Activated B cell treated with CpG ODN at 0.5 μM for 24 hours (primary cell): ENCODE measurements at regions of chr5 and their contacts with region 1.

Region 1: GRCh38 chr5:6632917-6633468 is at the starts of genes NSUN2 and SRD5A1:
- DNase-seq: peak; percentile 97
- ATAC-seq: peak; percentile 88
- H3K4me3 Mint-ChIP-seq: peak within 1 kb of the TSS; percentile 92
- H3K27ac Mint-ChIP-seq: peak within 1 kb of the TSS; percentile 99
- H3K4me1 Mint-ChIP-seq: peaks cover 44% of the 10 kb centered on the region
- H3K27me3 Mint-ChIP-seq: no peaks in the 10 kb centered on the region
- CTCF ChIP-seq: no peak
- total RNA-seq, gene NSUN2: 86.4 and 93.3 TPM in 2 replicates
- total RNA-seq, gene SRD5A1: 11.5 and 14.8 TPM in 2 replicates

Region 2: GRCh38 chr5:5421961-5422818 is 1210.8 kb before region 1 on chr5 and contains the start of gene ICE1:
- CTCF ChIA-PET with region 1: no interaction called
- POLR2A ChIA-PET with region 1: interaction called, 19 read pairs
- intact Hi-C with region 1: loop called (anchors 1 kb)
- DNase-seq: peak; percentile 92
- ATAC-seq: peak; percentile 87
- H3K4me3 Mint-ChIP-seq: peak within 1 kb of the TSS; percentile 96
- H3K27ac Mint-ChIP-seq: peak within 1 kb of the TSS; percentile 95
- H3K4me1 Mint-ChIP-seq: peaks cover 15% of the 10 kb centered on the region
- H3K27me3 Mint-ChIP-seq: no peaks in the 10 kb centered on the region
- CTCF ChIP-seq: no peak
- total RNA-seq, gene ICE1: 32.7 and 36.8 TPM in 2 replicates

Region 3: GRCh38 chr5:6377905-6378765 is 254.9 kb before region 1 on chr5 and contains the start of gene MED10:
- CTCF ChIA-PET with region 1: no interaction called
- POLR2A ChIA-PET with region 1: interaction called, 17 read pairs
- intact Hi-C with region 1: loop called (anchors 1 kb)
- DNase-seq: peak; percentile 91
- ATAC-seq: peak; percentile 98
- H3K4me3 Mint-ChIP-seq: peak within 1 kb of the TSS; percentile 95
- H3K27ac Mint-ChIP-seq: peak within 1 kb of the TSS; percentile 89
- H3K4me1 Mint-ChIP-seq: peaks cover 38% of the 10 kb centered on the region
- H3K27me3 Mint-ChIP-seq: peaks cover 2% of the 10 kb centered on the region
- CTCF ChIP-seq: no peak
- total RNA-seq, gene MED10: 45.0 and 47.7 TPM in 2 replicates

Region 4: DNA sequence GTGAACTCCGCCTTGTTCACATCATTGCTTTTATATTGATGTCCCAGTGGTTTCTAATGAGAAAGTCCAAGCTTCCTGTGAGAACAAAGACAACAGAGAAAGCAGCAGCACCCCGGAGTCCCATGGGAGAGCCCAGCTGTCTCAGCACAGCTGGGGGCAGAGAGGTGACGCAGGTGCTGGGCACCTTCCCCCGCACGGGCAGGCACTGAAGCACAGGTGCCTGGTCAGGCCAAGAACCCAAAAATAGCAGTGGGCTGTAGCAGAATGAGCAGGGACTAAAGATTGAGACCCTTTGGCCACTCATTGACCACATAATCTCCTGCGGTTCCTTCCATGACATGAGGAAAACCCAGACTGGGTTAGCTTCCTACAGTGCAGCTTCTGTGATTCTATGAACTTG is 19.0 kb after region 1 on chr5:
- CTCF ChIA-PET with region 1: no interaction called
- POLR2A ChIA-PET with region 1: interaction called, 14 read pairs
- intact Hi-C with region 1: no loop called
- DNase-seq: no peak
- ATAC-seq: peak; percentile 91
- H3K4me3 Mint-ChIP-seq: peak overlapping the region; percentile 32
- H3K27ac Mint-ChIP-seq: peak overlapping the region; percentile 59
- H3K4me1 Mint-ChIP-seq: peaks cover 16% of the 10 kb centered on the region
- H3K27me3 Mint-ChIP-seq: no peaks in the 10 kb centered on the region
- CTCF ChIP-seq: no peak

Region 5: GRCh38 chr5:6675763-6676499 is 42.9 kb after region 1 on chr5:
- CTCF ChIA-PET with region 1: no interaction called
- POLR2A ChIA-PET with region 1: no interaction called
- intact Hi-C with region 1: no loop called
- DNase-seq: no peak
- ATAC-seq: no peak
- H3K4me3 Mint-ChIP-seq: no peak overlapping the region
- H3K27ac Mint-ChIP-seq: no peak overlapping the region
- H3K4me1 Mint-ChIP-seq: no peaks in the 10 kb centered on the region
- H3K27me3 Mint-ChIP-seq: no peaks in the 10 kb centered on the region
- CTCF ChIP-seq: no peak

Region 6: GRCh38 chr5:6712577-6713275 is 79.7 kb after region 1 on chr5:
- CTCF ChIA-PET with region 1: interaction called, 6 read pairs
- POLR2A ChIA-PET with region 1: interaction called, 44 read pairs
- intact Hi-C with region 1: loop called (anchors 1 kb)
- DNase-seq: peak; percentile 98
- ATAC-seq: peak; percentile 79
- H3K4me3 Mint-ChIP-seq: peak overlapping the region; percentile 89
- H3K27ac Mint-ChIP-seq: peak overlapping the region; percentile 92
- H3K4me1 Mint-ChIP-seq: peaks cover 38% of the 10 kb centered on the region
- H3K27me3 Mint-ChIP-seq: no peaks in the 10 kb centered on the region
- CTCF ChIP-seq: no peak

Region 7: DNA sequence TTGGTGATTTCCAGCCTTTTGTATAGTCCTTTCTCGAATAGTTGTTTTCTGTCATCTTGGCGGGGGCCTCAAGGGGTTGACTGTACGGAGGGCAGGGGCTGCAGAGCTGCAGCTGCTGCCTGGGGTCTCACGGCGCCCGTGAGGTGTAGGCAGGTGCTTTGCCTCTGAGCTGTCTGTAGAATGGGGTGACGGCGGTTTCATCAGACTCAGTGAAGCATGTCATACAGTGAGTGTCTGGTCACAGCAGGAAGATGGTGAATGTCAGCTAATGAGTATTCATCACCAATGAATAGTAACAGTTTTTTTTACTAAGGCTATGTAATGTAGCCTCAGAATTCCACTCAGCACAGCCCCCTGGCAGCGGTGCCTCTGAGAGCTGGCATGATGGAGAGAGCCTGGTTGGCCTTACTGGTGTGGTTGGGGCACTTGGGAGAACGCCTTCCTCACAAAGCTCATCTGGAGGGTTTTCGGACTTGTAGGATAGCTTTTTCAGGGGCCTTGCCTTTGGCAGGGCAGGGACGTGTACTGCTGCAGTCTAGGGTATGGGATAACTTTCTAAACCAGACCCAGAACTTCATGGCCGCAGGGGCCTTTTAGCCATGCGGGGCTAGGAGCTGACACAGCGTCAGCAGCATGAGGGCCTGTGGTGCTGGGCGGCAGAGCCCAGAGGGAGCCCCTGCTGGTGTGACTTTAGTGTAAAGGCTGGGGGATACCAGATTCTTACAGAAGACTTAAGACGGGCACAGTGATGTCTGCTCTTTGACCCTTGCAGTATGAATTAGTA is 95.2 kb after region 1 on chr5:
- CTCF ChIA-PET with region 1: interaction called, 3 read pairs
- POLR2A ChIA-PET with region 1: interaction called, 13 read pairs
- intact Hi-C with region 1: no loop called
- DNase-seq: peak; percentile 34
- ATAC-seq: peak; percentile 95
- H3K4me3 Mint-ChIP-seq: peak overlapping the region; percentile 74
- H3K27ac Mint-ChIP-seq: peak overlapping the region; percentile 90
- H3K4me1 Mint-ChIP-seq: peaks cover 84% of the 10 kb centered on the region
- H3K27me3 Mint-ChIP-seq: no peaks in the 10 kb centered on the region
- CTCF ChIP-seq: no peak

Region 8: DNA sequence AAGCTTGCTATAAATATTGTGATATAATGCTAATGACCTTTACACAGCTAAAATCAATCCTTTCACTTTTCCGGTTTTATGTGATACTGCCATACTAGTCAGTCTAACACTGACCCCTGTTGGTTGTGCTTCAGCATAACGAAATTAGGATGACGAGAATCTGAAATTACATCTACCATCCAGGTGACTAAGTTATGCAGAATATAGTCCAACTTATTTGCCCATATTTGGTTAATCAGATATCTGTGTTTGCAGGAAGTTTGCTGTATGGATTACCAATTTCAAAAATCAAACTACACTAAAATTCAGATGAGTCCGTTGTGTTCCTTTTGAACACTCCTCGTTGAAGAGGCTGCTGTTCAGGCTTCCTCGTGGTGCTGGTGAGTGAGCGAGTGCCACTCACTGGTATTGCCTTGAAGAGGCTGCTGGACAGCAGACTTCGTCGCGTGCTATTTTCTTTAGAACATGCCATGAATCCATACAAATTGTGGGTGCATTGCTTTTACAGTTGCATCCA is 112.8 kb after region 1 on chr5:
- CTCF ChIA-PET with region 1: interaction called, 28 read pairs
- POLR2A ChIA-PET with region 1: interaction called, 17 read pairs
- intact Hi-C with region 1: loop called (anchors 1 kb)
- DNase-seq: no peak
- ATAC-seq: peak; percentile 87
- H3K4me3 Mint-ChIP-seq: no peak overlapping the region
- H3K27ac Mint-ChIP-seq: peak overlapping the region; percentile 46
- H3K4me1 Mint-ChIP-seq: peaks cover 9% of the 10 kb centered on the region
- H3K27me3 Mint-ChIP-seq: no peaks in the 10 kb centered on the region
- CTCF ChIP-seq: peak; percentile 71

Region 9: DNA sequence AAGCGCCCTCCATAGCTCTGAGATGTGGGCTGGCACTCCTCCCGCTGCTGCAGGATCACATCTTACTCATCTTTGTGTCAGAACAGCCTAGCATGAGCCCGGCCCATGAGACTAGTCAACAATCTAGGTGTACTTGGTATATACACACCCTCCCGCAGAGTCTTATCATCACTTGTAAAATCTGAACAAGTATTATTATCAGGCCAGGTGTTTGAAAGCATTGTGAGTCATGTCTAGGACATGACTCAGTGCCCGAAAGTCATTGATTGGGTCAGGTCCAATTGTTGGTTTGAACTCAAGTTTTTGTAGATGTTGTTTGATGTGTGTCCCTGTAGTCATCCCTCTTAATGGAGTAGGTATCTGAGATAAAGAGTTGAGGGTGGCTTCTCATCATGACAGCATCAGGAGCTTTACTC is 1109.3 kb after region 1 on chr5:
- CTCF ChIA-PET with region 1: no interaction called
- POLR2A ChIA-PET with region 1: no interaction called
- intact Hi-C with region 1: no loop called
- DNase-seq: no peak
- ATAC-seq: no peak
- H3K4me3 Mint-ChIP-seq: no peak overlapping the region
- H3K27ac Mint-ChIP-seq: no peak overlapping the region
- H3K4me1 Mint-ChIP-seq: no peaks in the 10 kb centered on the region
- H3K27me3 Mint-ChIP-seq: peaks cover 5% of the 10 kb centered on the region
- CTCF ChIP-seq: no peak